ENCODE measurements at regions of chr12 and their contacts with region 1.

Region 1: DNA sequence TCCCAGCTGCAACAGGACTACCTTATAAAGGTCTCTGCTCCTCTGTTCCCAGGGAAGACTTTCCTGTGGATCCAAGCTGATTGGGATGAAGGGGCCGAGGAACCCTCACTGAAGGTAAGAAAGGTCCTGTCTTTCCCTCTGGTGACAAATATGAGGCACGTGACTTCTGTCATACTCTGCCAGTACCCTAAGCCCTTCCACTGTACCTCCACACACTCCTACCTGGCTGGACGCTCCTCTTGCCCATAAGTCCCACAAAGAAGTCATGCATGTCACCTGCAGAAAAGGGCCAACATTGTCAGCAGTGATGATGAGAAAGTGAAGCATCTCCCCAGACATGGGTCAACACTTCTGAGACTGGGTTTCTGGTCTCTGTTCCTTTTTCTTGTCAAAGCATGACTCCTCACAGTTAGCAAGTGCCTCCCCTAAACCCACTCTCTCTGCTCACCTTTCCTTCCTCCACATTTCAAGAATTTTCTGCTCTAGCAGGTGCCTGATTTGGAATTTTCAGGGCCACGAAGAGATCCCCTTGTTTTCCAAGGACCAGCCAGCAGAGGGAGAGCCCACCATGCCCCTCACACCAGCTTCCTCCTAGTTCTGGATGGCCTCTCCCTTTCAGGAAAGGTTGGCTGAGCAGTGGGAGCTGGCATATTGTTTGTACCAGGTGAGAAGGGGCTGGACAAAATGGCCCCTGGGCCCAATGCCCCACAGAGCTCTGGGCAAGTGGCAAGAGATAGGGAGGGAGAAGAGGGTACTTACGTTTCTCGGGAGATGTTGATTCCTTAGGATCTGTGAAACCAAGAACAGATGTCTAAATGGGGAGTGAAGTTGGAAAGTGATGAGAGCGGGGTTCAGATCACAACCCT is 3.5 kb downstream of the TAC3 start:
- DNase-seq: peak; percentile 62
- CTCF ChIP-seq: no peak

Region 2: GRCh38 chr12:56863789-56864188 is 149.0 kb before region 1 on chr12:
- in situ Hi-C with region 1: no loop called
- DNase-seq: no peak
- CTCF ChIP-seq: no peak

Region 3: GRCh38 chr12:57069523-57069922 is 56.7 kb after region 1 on chr12:
- in situ Hi-C with region 1: loop called (anchors 10 kb)
- DNase-seq: peak; percentile 62
- CTCF ChIP-seq: peak; percentile 74